ENCODE measurements at regions of chr5 and their contacts with region 1.

Region 1: DNA sequence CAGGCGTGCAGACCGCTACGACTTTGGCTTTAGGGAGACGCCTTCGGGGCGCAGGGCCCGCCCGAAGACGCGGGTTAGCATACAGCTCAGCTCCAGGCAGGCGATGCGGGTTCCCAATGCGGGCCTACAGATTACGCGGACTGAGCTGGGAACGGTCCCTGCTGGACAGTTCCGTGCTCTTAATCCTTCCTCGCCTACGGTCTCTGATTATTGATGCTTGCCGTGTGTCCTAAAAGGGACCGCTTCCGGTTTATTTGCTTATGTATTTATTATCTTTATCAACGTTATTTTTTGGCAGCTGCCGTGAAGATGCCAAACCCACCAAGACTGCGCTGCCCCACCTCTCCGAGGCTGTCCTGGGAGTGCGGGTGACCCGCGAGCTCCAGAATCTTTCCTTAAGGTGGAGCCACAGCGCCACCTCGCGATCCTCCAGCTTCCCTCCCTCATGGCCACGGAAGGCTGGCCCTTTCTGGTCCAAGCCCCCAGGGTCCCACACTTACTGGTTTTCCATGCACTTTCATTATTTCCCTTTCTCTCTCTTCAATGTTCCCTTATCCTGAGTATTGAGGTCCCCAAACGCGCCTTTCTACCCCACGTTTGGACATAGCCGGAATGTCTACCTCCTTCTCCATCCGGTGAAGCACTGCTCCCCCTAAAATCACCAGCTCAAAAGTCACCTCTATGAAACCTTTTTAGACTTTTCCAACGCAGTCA is 7.0 kb upstream of the EBF1 start:
- DNase-seq: peak; percentile 74
- H3K4me3 ChIP-seq: peak overlapping the region in 3 of 4 donors; percentile 6 to 41 (median 17)
- H3K27ac ChIP-seq: no peak overlapping the region
- H3K4me1 ChIP-seq: peaks cover 0 to 9% (median 8%) of the 10 kb centered on the region in 4 donors
- H3K27me3 ChIP-seq: peaks cover 100% of the 10 kb centered on the region
- CTCF ChIP-seq: peak; percentile 79 to 87 (median 81)
- EP300 ChIP-seq: no peak
- POLR2A ChIP-seq: no peak

Region 2: DNA sequence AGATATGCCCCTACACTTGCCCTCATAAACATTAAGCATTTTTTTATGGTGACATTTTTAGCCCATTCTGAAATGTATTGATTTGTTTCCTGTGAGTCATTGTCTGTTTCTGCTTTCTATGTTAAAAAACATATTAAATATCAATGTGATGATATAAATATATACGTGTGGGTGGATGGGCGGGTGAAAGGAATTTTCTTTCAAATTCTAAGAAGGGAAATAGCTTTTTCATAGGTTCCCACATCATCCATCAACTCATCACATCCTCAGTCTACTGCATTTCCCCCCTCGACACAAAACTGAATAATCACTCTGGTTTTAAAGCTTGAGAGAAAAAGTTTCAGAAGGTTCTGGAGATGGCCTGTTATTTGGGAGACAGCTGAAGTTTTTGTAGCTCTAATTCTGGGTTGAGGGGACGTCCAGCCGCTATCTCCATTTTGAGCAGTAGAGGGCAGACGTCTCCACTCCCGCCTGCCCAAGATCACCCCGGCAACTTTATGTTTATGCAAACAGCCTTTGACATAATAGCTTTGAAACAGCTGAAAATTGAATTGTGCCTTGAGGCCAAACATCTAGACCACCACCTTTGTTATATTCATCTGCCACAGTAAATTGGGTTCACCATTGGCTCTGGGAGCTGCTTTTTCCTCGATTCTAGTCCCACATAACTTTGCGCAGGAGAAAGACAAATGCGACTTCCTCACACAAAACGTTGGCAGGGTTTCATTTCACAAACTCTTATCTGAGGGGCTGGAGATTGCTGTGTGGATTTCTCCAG is 1031.5 kb before region 1 on chr5:
- in situ Hi-C with region 1: loop called in 1 of 4 experiments (anchors 25 kb)
- intact Hi-C with region 1: loop called (anchors 5 kb)
- DNase-seq: peak; percentile 57
- H3K4me3 ChIP-seq: peak overlapping the region in 1 of 4 donors; percentile 7
- H3K27ac ChIP-seq: peak overlapping the region in 1 of 4 donors; percentile 28
- H3K4me1 ChIP-seq: peaks cover 0 to 4% (median 2%) of the 10 kb centered on the region in 4 donors
- H3K27me3 ChIP-seq: no peaks in the 10 kb centered on the region
- CTCF ChIP-seq: peak; percentile 71 to 86 (median 79)
- EP300 ChIP-seq: no peak
- POLR2A ChIP-seq: no peak

Region 3: DNA sequence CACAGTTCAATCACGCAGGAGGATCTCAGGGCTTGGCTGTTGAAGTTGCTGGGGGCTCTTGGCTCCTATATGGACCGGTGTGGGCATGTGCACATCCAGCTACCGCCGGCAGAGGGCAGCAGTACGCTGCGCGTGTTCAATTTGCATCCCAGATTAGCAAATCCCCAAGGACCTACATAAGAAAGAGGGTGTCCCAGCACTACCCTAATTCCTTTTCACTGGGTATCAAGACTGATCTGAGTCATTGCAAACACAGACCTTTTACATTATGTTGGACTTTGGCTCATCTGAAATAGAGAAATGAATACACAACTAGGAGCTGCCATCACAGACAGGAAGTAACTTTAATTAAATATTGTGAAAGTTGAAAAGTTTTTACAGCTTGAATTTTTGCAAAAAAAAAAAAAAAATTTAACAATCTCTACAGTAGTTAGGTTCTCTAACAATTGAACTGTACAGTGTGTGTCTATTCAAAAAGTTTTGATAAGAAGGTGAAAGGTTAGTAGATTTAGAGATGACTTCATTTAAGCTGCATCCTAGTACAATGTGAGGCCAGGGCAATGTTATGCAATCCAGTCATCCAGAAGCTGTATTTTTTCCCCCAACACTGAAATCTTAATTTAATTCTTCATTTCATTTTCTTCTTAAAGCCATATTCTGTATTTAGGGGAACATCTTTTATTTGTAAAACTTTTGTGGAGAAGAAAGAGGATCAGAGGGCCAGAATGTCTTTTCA is 411.0 kb before region 1 on chr5:
- in situ Hi-C with region 1: loop called (anchors 5 to 10 kb)
- intact Hi-C with region 1: loop called (anchors 5 kb)
- DNase-seq: peak; percentile 72
- H3K4me3 ChIP-seq: no peak overlapping the region
- H3K27ac ChIP-seq: no peak overlapping the region
- H3K4me1 ChIP-seq: peaks cover 0 to 5% (median 0%) of the 10 kb centered on the region in 4 donors
- H3K27me3 ChIP-seq: peaks cover 11% of the 10 kb centered on the region
- CTCF ChIP-seq: peak; percentile 83 to 97 (median 95)
- EP300 ChIP-seq: no peak
- POLR2A ChIP-seq: no peak